Caco-2 (cell line): ENCODE measurements at regions of chr19 and their contacts with region 1.

Region 1: GRCh38 chr19:46924874-46925547 is 64.2 kb downstream of the ARHGAP35 start:
- DNase-seq: peak; percentile 20 to 36
- H3K4me3 ChIP-seq: no peak overlapping the region
- H3K4me3 Mint-ChIP-seq: peak overlapping the region; percentile 50
- H3K27ac Mint-ChIP-seq: peak overlapping the region; percentile 80
- H3K4me1 ChIP-seq: peaks cover 34% of the 10 kb centered on the region
- H3K4me1 Mint-ChIP-seq: peaks cover 32% of the 10 kb centered on the region
- H3K27me3 ChIP-seq: no peaks in the 10 kb centered on the region
- H3K27me3 Mint-ChIP-seq: no peaks in the 10 kb centered on the region
- CTCF ChIP-seq: no peak

Region 2: DNA sequence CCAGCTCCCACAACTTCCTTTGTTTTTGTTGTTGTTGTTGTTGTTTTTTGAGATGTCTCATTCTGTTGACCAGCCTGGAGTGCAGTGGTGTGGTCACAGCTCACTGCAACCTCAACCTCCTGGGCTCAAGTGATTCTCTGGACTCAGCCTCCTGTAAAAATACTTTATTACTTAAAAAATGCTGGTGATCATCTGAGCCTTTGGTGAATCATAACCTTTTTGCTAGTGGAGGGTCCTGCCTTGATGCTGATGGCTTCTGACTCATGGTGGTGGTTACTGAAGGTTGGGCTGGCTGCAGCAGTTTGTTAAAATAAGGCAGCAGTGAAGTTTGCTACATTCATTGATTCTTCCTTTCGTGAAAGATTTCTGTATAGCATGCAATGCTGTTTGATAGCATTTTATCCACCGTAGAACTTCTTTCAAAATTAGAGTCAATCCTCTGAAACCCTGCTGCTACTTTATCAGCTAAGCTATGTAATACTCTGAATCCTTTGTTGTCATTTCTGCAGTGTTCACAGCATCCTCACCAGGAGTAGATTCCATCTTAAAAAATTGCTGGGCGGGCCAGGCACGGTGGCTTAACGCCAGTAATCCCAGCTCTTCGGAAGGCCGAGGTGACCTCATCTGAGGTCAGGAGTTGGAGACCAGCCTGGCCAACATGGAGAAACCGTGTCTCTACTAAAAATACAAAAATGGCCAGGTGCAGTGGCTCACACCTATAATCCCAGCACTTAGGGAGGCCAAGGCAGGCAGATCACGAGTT is 46.2 kb before region 1 on chr19:
- CTCF ChIA-PET with region 1: no interaction called
- POLR2A ChIA-PET with region 1: no interaction called
- intact Hi-C with region 1: no loop called
- DNase-seq: no peak
- H3K4me3 ChIP-seq: no peak overlapping the region
- H3K4me3 Mint-ChIP-seq: no peak overlapping the region
- H3K27ac Mint-ChIP-seq: no peak overlapping the region
- H3K4me1 ChIP-seq: peaks cover 40% of the 10 kb centered on the region
- H3K4me1 Mint-ChIP-seq: peaks cover 32% of the 10 kb centered on the region
- H3K27me3 ChIP-seq: no peaks in the 10 kb centered on the region
- H3K27me3 Mint-ChIP-seq: no peaks in the 10 kb centered on the region
- CTCF ChIP-seq: no peak

Region 3: GRCh38 chr19:46902402-46902766 is 22.6 kb before region 1 on chr19:
- CTCF ChIA-PET with region 1: interaction called, 5 read pairs
- POLR2A ChIA-PET with region 1: no interaction called
- intact Hi-C with region 1: loop called (anchors 1 kb)
- DNase-seq: peak; percentile 61 to 67
- H3K4me3 ChIP-seq: no peak overlapping the region
- H3K4me3 Mint-ChIP-seq: peak overlapping the region; percentile 1
- H3K27ac Mint-ChIP-seq: peak overlapping the region; percentile 56
- H3K4me1 ChIP-seq: peaks cover 48% of the 10 kb centered on the region
- H3K4me1 Mint-ChIP-seq: peaks cover 51% of the 10 kb centered on the region
- H3K27me3 ChIP-seq: no peaks in the 10 kb centered on the region
- H3K27me3 Mint-ChIP-seq: no peaks in the 10 kb centered on the region
- CTCF ChIP-seq: no peak

Region 4: DNA sequence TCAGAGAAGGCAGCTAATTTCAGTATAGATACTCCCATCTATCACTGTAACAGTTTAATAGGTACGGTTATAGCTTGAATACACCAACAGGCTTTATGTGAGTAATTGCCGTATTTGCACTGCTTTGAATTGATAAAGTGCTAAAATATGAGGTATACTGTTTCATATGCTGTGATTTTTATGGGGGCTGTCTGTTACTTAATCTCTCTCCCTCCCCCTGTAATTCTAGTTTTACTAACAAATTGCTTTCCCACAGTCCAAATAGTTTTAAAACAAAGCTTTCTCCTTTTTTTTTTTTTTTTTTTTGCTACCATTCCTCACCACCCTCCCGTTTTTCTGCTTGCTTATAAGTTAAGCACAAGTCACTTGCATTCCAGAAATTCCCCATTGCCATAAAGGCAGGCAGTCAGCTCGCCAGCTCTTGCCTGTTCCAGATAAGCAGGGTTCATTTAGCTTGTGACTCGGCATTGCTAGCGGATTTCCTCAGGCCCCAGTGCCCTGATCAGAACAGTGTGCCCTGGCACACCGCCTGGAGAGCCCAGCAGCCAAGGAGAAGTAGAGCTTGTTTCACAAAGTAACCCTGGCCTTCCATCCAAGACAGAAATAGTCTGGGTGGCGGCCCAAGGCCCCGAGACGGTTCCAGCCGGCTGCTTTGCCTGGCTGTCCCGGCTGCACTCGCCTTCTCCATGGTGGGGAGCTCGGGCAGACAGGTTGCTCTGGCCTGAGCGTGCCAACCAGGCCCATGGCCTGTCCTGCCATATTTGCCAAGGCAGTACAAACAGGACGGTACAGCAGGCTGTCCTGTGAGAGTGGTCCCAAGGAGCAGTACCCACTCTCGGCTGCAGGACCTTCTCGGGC is 51.1 kb after region 1 on chr19:
- CTCF ChIA-PET with region 1: interaction called, 4 read pairs
- POLR2A ChIA-PET with region 1: no interaction called
- intact Hi-C with region 1: loop called (anchors 5 kb)
- DNase-seq: peak; percentile 68 to 86
- H3K4me3 ChIP-seq: no peak overlapping the region
- H3K4me3 Mint-ChIP-seq: peak overlapping the region; percentile 56
- H3K27ac Mint-ChIP-seq: peak overlapping the region; percentile 98
- H3K4me1 ChIP-seq: peaks cover 48% of the 10 kb centered on the region
- H3K4me1 Mint-ChIP-seq: peaks cover 40% of the 10 kb centered on the region
- H3K27me3 ChIP-seq: no peaks in the 10 kb centered on the region
- H3K27me3 Mint-ChIP-seq: no peaks in the 10 kb centered on the region
- CTCF ChIP-seq: no peak

Region 5: GRCh38 chr19:46990991-46991676 is 66.1 kb after region 1 on chr19:
- CTCF ChIA-PET with region 1: interaction called, 7 read pairs
- POLR2A ChIA-PET with region 1: no interaction called
- intact Hi-C with region 1: loop called (anchors 5 kb)
- DNase-seq: peak; percentile 81 to 86
- H3K4me3 ChIP-seq: no peak overlapping the region
- H3K4me3 Mint-ChIP-seq: no peak overlapping the region
- H3K27ac Mint-ChIP-seq: no peak overlapping the region
- H3K4me1 ChIP-seq: peaks cover 4% of the 10 kb centered on the region; the same call in 1 of the 2 replicates
- H3K4me1 Mint-ChIP-seq: peaks cover 5% of the 10 kb centered on the region
- H3K27me3 ChIP-seq: no peaks in the 10 kb centered on the region
- H3K27me3 Mint-ChIP-seq: no peaks in the 10 kb centered on the region
- CTCF ChIP-seq: peak; percentile 88 to 92

Region 6: GRCh38 chr19:47005873-47006272 is 80.9 kb after region 1 on chr19:
- CTCF ChIA-PET with region 1: no interaction called
- POLR2A ChIA-PET with region 1: no interaction called
- intact Hi-C with region 1: no loop called
- DNase-seq: no peak
- H3K4me3 ChIP-seq: no peak overlapping the region
- H3K4me3 Mint-ChIP-seq: no peak overlapping the region
- H3K27ac Mint-ChIP-seq: no peak overlapping the region
- H3K4me1 ChIP-seq: no peaks in the 10 kb centered on the region
- H3K4me1 Mint-ChIP-seq: no peaks in the 10 kb centered on the region
- H3K27me3 ChIP-seq: no peaks in the 10 kb centered on the region
- H3K27me3 Mint-ChIP-seq: no peaks in the 10 kb centered on the region
- CTCF ChIP-seq: no peak